ENCODE measurements at regions of chr12 and their contacts with region 1.

Region 1: DNA sequence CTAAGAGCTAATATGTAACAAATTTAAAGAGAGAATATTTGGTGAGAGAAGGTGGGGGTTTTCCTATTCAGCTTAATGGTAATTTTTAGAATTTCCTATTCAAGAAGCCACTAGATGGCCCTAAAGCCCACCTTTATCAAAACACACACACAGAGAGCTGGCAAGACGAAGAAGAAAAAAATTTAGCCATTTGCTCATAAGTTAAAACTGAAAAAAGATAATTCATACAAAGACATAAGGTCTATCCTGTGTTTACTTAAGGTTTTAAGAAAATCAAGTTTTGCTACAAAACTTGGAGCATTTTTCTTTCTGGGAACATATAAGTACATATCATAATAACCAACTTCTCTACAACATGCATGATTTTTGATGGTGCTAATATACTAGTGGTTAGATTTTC is 46.8 kb upstream of the PCED1B start:
- DNase-seq: no peak
- H3K4me3 ChIP-seq: no peak overlapping the region
- H3K27ac ChIP-seq: peak overlapping the region in 1 of 8 donors; percentile 1
- H3K4me1 ChIP-seq: peaks cover 0 to 15% (median 6%) of the 10 kb centered on the region in 6 donors
- H3K27me3 ChIP-seq: no peaks in the 10 kb centered on the region
- CTCF ChIP-seq: peak in 10 of 11 experiments; percentile 24 to 80 (median 64)
- POLR2A ChIP-seq: no peak

Region 2: DNA sequence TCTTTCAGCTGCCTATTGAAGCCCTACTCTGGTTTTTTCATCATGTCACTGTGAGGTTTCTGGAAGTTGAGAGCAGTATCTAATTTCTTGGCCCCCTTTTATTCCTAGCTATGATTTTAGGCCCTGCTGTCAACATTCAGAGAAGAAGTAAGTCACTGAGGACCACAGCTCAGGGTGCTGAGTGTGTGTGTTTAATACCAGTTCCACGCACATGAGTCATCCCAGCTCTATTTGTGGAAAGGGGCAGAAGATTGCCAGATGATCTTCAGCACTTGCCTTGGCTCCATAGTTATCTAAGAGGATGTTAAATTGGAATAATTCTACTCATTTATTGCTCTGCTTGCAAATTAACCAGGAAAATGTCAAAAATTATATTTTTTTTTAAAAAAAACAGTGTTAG is 141.3 kb before region 1 on chr12:
- intact Hi-C with region 1: no loop called
- DNase-seq: no peak
- H3K4me3 ChIP-seq: no peak overlapping the region
- H3K27ac ChIP-seq: no peak overlapping the region
- H3K4me1 ChIP-seq: no peaks in the 10 kb centered on the region
- H3K27me3 ChIP-seq: peaks cover 0 to 8% (median 0%) of the 10 kb centered on the region in 7 donors
- CTCF ChIP-seq: no peak
- POLR2A ChIP-seq: no peak

Region 3: GRCh38 chr12:47164724-47165439 is 132.2 kb after region 1 on chr12:
- intact Hi-C with region 1: no loop called
- DNase-seq: no peak
- H3K4me3 ChIP-seq: no peak overlapping the region
- H3K27ac ChIP-seq: no peak overlapping the region
- H3K4me1 ChIP-seq: peaks cover 0 to 13% (median 0%) of the 10 kb centered on the region in 6 donors
- H3K27me3 ChIP-seq: no peaks in the 10 kb centered on the region
- CTCF ChIP-seq: no peak
- POLR2A ChIP-seq: no peak

Region 4: GRCh38 chr12:47400251-47400650 is 367.6 kb after region 1 on chr12:
- intact Hi-C with region 1: loop called (anchors 5 kb)
- DNase-seq: no peak
- H3K4me3 ChIP-seq: no peak overlapping the region
- H3K27ac ChIP-seq: no peak overlapping the region
- H3K4me1 ChIP-seq: peaks cover 0 to 16% (median 12%) of the 10 kb centered on the region in 6 donors
- H3K27me3 ChIP-seq: no peaks in the 10 kb centered on the region
- CTCF ChIP-seq: no peak
- POLR2A ChIP-seq: no peak

Region 5: GRCh38 chr12:47686645-47687240 is 654.1 kb after region 1 on chr12:
- intact Hi-C with region 1: loop called (anchors 5 kb)
- DNase-seq: no peak
- H3K4me3 ChIP-seq: no peak overlapping the region
- H3K27ac ChIP-seq: no peak overlapping the region
- H3K4me1 ChIP-seq: no peaks in the 10 kb centered on the region
- H3K27me3 ChIP-seq: no peaks in the 10 kb centered on the region
- CTCF ChIP-seq: peak; percentile 17 to 65 (median 44)
- POLR2A ChIP-seq: no peak